PC-3 (cell line): ENCODE measurements at regions of chr4 and their contacts with region 1.

Region 1: DNA sequence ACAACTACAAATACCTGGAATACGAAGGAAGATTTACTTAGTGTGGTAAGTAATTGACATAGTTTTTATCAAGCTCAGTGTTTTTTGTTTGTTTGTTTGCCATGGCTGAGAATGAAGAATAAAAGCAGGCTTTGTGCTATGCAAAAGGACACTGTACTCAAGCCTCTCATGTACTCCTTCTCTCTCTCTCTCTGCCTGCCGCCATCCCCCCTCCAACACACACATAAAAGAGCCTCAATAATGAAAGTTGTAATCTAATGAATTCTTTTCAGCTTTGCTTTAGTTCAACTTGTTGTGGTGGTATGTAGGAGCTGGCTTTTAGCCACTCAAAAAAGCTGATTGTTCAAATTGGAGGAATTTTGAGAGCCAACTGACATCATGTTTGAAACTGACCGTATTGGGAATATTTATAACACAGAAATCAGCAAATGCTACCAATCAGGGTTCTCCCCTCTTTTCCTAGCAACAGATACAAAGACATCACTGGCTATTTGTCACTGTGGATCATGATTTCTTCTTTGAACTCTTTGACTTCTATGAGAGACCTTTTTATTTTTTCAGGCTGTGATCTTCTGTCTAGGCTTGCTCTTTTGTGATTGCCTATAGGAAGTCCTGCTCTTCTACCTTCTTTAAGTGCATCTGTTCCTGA is 1148.8 kb downstream of the RAPGEF2 start:
- DNase-seq: no peak
- ATAC-seq: no peak
- H3K4me3 ChIP-seq: no peak overlapping the region
- H3K27ac ChIP-seq: no peak overlapping the region
- H3K4me1 ChIP-seq: no peaks in the 10 kb centered on the region
- H3K27me3 ChIP-seq: no peaks in the 10 kb centered on the region
- CTCF ChIP-seq: no peak

Region 2: DNA sequence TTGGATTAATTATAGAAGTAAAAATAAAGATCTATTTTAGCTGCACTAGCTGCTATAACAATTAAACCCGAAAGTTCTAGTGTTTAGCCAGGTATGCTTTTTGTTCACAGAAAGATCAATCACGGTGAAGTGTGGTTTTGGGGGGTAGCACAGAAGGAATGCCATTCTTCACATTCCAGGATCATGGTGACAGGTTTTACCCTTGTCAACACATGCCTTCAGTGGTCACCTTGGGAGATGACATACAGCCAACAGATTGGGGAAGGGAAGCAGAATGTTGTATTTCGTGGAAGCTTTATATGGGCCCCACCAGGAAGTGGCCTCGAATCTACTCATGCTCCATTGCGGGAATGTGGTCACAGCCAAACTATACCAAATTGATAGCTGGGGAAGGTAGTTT is 395.2 kb before region 1 on chr4:
- CTCF ChIA-PET with region 1: interaction called, 13 read pairs
- POLR2A ChIA-PET with region 1: no interaction called
- intact Hi-C with region 1: no loop called
- DNase-seq: no peak
- ATAC-seq: no peak
- H3K4me3 ChIP-seq: no peak overlapping the region
- H3K27ac ChIP-seq: no peak overlapping the region
- H3K4me1 ChIP-seq: no peaks in the 10 kb centered on the region
- H3K27me3 ChIP-seq: no peaks in the 10 kb centered on the region
- CTCF ChIP-seq: no peak

Region 3: DNA sequence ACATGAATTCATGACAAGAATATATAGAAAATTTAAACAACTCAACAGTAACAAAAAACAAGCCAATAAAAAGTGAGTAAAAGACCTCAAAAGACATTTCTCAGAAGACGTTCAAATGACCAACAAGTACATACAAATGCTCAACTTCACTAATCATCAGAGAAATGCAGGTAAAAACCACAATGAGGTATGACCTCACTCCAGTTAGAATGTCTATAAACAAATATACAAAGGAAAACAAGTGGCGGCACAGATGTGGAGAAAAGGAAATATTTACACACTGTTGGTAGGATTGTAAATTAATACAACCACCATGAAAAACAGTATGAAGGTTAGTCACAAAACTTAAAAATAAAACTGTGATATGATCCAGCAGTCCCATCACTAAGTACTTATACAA is 115.6 kb before region 1 on chr4:
- CTCF ChIA-PET with region 1: no interaction called
- POLR2A ChIA-PET with region 1: no interaction called
- intact Hi-C with region 1: no loop called
- DNase-seq: peak; percentile 56
- ATAC-seq: peak; percentile 77
- H3K4me3 ChIP-seq: no peak overlapping the region
- H3K27ac ChIP-seq: no peak overlapping the region
- H3K4me1 ChIP-seq: no peaks in the 10 kb centered on the region
- H3K27me3 ChIP-seq: no peaks in the 10 kb centered on the region
- CTCF ChIP-seq: no peak

Region 4: GRCh38 chr4:160265836-160266235 is 14.2 kb after region 1 on chr4:
- CTCF ChIA-PET with region 1: no interaction called
- POLR2A ChIA-PET with region 1: no interaction called
- intact Hi-C with region 1: no loop called
- DNase-seq: no peak
- ATAC-seq: no peak
- H3K4me3 ChIP-seq: no peak overlapping the region
- H3K27ac ChIP-seq: no peak overlapping the region
- H3K4me1 ChIP-seq: no peaks in the 10 kb centered on the region
- H3K27me3 ChIP-seq: no peaks in the 10 kb centered on the region
- CTCF ChIP-seq: no peak